ENCODE measurements at regions of chr7 and their contacts with region 1.

Region 1: GRCh38 chr7:137953665-137954470 is 48.0 kb downstream of the CREB3L2 start:
- DNase-seq: no peak
- ATAC-seq: no peak
- H3K4me3 ChIP-seq: no peak overlapping the region
- H3K27ac ChIP-seq: peak overlapping the region in 3 of 12 donors; percentile 6 to 76 (median 26)
- H3K4me1 ChIP-seq: peaks cover 0 to 90% (median 53%) of the 10 kb centered on the region in 12 donors
- H3K27me3 ChIP-seq: no peaks in the 10 kb centered on the region
- CTCF ChIP-seq: no peak
- POLR2A ChIP-seq: no peak

Region 2: DNA sequence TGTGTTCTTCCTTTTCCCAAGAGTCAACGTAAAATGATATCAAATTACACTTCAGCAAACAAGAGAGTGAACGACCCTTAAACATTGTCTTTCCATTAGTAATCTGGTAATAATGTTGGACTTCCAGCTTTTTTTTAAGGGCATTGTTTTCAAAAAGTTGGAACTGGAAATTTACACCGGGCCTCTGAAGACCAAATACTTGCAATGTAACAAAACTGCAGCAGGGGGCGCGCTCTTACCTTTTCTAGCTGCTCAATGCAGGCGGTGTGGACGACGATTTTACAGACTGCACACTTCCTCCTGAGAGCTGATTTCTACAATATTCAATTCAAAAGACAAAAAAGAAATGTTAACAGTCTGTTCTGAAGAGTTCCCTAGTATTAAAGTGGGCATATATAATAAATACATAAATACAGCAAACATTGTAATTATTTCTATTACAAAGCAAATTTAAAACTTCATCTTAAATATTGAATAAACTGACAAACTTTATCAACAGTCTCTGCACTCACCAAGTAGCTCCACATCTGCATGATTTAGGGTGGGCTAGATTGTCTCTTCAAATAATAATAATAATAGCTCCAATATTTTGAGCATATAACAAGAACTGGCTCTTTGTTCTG is 297.5 kb before region 1 on chr7:
- intact Hi-C with region 1: no loop called
- DNase-seq: peak; percentile 73 to 85 (median 79)
- ATAC-seq: peak; percentile 70 to 90 (median 82)
- H3K4me3 ChIP-seq: no peak overlapping the region
- H3K27ac ChIP-seq: peak overlapping the region in 4 of 12 donors; percentile 3 to 28 (median 6)
- H3K4me1 ChIP-seq: peaks cover 0 to 25% (median 10%) of the 10 kb centered on the region in 12 donors
- H3K27me3 ChIP-seq: no peaks in the 10 kb centered on the region
- CTCF ChIP-seq: peak; percentile 76 to 91 (median 86)
- POLR2A ChIP-seq: no peak

Region 3: GRCh38 chr7:137898839-137899721 is 54.8 kb before region 1 on chr7:
- intact Hi-C with region 1: no loop called
- DNase-seq: peak; percentile 79 to 89 (median 84)
- ATAC-seq: peak; percentile 92 to 95 (median 95)
- H3K4me3 ChIP-seq: peak overlapping the region in 5 of 12 donors; percentile 12 to 30 (median 26)
- H3K27ac ChIP-seq: peak overlapping the region in 10 of 12 donors; percentile 21 to 72 (median 50)
- H3K4me1 ChIP-seq: peaks cover 0 to 35% (median 20%) of the 10 kb centered on the region in 12 donors
- H3K27me3 ChIP-seq: no peaks in the 10 kb centered on the region
- CTCF ChIP-seq: peak; percentile 90 to 97 (median 95)
- POLR2A ChIP-seq: no peak

Region 4: DNA sequence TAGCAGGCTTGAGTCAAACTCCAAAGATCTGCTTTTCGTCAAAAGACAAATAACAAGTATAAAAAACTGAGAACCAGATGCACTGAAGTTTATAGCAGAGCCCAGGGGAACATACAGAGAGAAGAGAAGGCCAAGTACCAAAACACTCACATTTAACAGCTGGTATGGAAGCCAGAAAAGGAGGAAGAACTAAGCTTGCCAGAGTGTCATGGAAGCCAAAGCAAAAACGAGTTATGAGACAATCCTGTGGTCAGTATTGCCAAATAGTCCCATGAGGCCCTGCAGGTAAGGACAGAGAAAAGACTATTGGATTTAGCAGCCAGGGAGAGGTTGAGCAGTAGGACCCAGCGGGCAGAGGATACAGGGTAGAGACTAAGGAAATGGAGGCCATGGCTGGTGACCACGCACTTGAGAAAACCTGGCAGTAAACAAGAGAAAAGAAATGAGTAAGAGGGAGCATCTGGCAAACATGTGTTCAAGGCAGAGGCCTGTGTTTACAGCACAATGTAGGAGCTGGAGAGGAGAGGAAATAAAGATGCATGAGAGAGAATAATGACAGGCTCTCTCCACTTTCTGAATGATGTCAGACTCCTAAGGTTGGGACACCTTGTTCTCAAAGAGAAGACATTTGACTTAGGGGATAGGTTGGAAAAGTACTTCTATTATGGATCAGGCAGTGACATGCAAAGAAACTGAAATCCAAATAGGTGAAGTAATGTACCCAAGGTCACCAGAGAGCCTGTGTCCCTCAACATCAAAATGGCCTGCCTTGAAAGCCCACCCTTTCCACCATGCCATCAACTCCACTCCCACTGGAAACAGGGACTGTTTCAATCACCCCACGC is 38.9 kb after region 1 on chr7:
- intact Hi-C with region 1: loop called in 2 of 10 experiments (anchors 5 to 10 kb)
- DNase-seq: peak in 4 of 5 donors; percentile 51 to 78 (median 67)
- ATAC-seq: peak; percentile 52 to 80 (median 74)
- H3K4me3 ChIP-seq: no peak overlapping the region
- H3K27ac ChIP-seq: peak overlapping the region; percentile 3 to 94 (median 70)
- H3K4me1 ChIP-seq: peaks cover 0 to 98% (median 79%) of the 10 kb centered on the region in 12 donors
- H3K27me3 ChIP-seq: no peaks in the 10 kb centered on the region
- CTCF ChIP-seq: no peak
- POLR2A ChIP-seq: no peak

Region 5: GRCh38 chr7:138125598-138126111 is 171.8 kb after region 1 on chr7:
- intact Hi-C with region 1: no loop called
- DNase-seq: no peak
- ATAC-seq: peak in 3 of 4 donors; percentile 33 to 52 (median 48)
- H3K4me3 ChIP-seq: no peak overlapping the region
- H3K27ac ChIP-seq: peak overlapping the region in 1 of 12 donors; percentile 55
- H3K4me1 ChIP-seq: peaks cover 0 to 15% (median 0%) of the 10 kb centered on the region in 12 donors
- H3K27me3 ChIP-seq: no peaks in the 10 kb centered on the region
- CTCF ChIP-seq: no peak
- POLR2A ChIP-seq: no peak

Measured in heart left ventricle (tissue), 16 donors.